ENCODE measurements at regions of chr9 and their contacts with region 1.

Region 1: DNA sequence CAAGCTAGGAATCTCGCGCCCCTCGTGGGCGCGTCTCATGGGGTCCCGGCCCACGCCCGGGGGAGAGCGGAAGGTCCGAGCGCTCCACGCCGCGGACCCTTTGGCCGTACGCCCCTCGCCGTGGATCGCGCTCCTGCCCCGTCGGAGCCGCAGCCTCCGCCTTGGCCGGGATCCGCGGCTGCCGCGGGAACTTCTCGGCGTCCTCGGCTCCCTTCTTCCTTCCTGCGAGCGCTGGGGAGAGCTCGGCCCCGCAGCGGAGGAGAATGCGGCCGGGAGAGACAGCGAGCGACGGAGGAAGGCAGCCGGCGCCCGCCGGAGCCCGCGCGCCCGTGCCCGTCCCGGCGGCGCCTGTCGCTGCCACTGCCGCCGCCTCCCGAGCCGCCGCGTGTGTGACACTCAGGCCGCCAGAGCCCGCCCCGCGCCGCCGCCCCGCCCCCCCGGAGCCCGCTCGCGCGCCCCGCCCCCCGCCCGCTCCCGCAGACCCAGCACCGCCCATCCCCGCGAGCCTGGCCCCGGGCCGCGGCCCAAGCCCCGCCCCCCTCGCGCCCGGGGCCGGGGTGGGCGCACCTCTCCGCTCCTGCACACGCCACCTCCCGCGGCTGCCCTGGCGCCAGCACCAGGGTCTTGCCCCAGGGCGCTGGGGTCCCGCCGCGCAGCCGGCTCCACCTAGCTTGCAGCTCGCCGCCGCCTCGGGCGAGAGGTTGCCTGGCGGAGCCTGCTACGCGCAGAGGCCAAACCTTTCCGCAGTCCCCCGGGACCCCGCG is at the start of gene SHB:
- DNase-seq: peak; percentile 63 to 75 (median 66)
- H3K4me3 ChIP-seq: peak within 1 kb of the TSS; percentile 79 to 91 (median 89)
- H3K4me3 Mint-ChIP-seq: peak within 1 kb of the TSS; percentile 94 to 98
- H3K27ac ChIP-seq: peak within 1 kb of the TSS; percentile 59 to 76
- H3K27ac Mint-ChIP-seq: peak within 1 kb of the TSS; percentile 16 to 88 (median 76)
- H3K4me1 ChIP-seq: peaks cover 23 to 34% of the 10 kb centered on the region in 2 donors
- H3K4me1 Mint-ChIP-seq: peaks cover 49% of the 10 kb centered on the region
- H3K27me3 ChIP-seq: peaks cover 2 to 9% of the 10 kb centered on the region in 2 donors
- H3K27me3 Mint-ChIP-seq: peaks cover 20 to 34% (median 27%) of the 10 kb centered on the region in 3 donors
- CTCF ChIP-seq: peak; percentile 38
- polyA plus RNA-seq, gene SHB: 0.27 to 1.3 (median 0.31) TPM

Region 2: DNA sequence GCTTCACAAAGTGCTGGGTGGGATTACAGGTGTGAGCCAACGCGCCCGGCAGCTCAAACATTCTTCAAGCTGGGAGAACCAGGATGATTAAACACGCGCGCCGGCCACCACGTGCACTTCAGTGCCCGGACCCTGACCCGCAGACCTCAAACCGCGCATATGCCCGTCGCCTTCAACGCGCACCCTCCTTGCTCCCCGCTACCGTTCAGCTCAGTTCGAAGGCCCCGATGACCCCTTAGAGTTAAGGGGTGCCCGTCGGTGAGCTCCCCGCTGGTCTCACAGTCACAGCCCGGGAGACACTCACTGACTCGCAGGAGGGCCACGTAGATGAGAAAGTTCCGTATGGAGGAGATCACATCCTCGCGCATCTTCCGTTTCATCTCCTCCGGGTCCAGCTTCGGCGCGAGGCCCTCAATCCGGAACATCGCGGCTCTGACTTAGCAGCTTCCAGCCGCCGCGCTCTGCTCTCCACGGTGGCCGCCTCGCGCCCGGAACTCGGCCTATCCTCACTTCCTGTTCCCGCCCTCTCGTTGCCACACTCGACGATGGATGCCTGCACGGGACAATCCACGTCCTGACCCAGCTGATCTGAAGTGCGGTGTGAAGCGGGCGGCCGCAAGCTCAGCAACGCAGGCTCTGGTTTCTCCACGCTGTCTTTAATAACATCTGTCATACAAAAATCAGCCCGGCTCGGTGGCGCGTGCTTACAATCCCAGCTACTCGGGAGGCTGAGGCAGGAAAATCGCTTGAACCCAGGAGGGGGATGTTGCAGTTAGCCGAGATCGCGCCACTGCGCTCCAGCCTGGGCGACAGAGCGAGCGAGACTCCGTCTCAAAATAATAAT is 476.7 kb before region 1 on chr9 and contains the start of gene TOMM5:
- intact Hi-C with region 1: no loop called
- DNase-seq: peak; percentile 86 to 93 (median 91)
- H3K4me3 ChIP-seq: peak within 1 kb of the TSS; percentile 63 to 94 (median 77)
- H3K4me3 Mint-ChIP-seq: peak within 1 kb of the TSS; percentile 98 to 99
- H3K27ac ChIP-seq: peak within 1 kb of the TSS; percentile 75 to 96
- H3K27ac Mint-ChIP-seq: peak within 1 kb of the TSS; percentile 94 to 98 (median 97)
- H3K4me1 ChIP-seq: peaks cover 28 to 32% of the 10 kb centered on the region in 2 donors
- H3K4me1 Mint-ChIP-seq: peaks cover 34% of the 10 kb centered on the region
- H3K27me3 ChIP-seq: peaks cover 0 to 4% of the 10 kb centered on the region in 2 donors
- H3K27me3 Mint-ChIP-seq: peaks cover 4 to 11% (median 7%) of the 10 kb centered on the region in 3 donors
- CTCF ChIP-seq: no peak
- polyA plus RNA-seq, gene TOMM5: 35.0 to 117 (median 112) TPM

Region 3: DNA sequence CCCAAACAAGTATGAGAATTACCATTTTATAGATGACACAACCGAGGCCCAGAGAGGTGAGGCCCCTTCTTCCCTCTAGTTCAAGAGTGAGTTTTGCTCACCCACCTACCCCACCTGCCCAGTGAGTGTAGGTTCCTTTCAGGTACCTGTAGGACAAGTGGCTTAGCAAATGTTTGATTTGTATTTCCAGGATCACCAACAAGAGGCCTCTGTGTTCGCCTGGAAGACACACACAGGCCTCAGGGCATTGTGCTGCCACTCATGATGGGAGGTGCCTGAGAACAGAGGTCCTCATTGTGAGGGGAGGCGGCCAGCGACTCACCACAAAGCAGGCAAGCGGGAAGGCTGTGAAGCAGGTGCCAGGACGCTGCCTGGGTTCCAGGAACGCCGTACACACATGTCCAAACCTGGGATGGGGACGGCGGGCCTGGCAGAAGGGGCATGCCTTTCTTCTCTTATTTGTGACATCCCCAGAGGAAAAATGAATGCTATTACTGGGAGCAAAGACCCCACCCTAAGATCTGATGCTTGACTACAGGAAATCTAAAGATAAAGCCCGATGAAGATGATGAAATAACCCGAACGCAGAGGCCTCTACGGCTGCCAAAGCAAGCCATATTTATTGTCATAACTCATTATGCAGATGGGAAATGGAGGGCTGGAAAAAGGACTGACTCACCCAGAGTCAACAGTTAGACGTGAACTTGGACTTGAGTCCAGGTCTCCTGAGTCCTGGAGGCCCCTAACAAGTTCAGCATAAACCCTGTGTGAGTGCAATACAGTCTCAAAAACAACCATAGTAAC is 104.9 kb before region 1 on chr9:
- intact Hi-C with region 1: loop called in 1 of 2 experiments (anchors 10 kb)
- DNase-seq: peak in 2 of 3 donors; percentile 25
- H3K4me3 ChIP-seq: no peak overlapping the region
- H3K4me3 Mint-ChIP-seq: no peak overlapping the region
- H3K27ac ChIP-seq: no peak overlapping the region
- H3K27ac Mint-ChIP-seq: peak overlapping the region in 3 of 7 donors; percentile 4 to 55 (median 44)
- H3K4me1 ChIP-seq: peaks cover 16 to 26% of the 10 kb centered on the region in 2 donors
- H3K4me1 Mint-ChIP-seq: peaks cover 42% of the 10 kb centered on the region
- H3K27me3 ChIP-seq: no peaks in the 10 kb centered on the region
- H3K27me3 Mint-ChIP-seq: peaks cover 0 to 5% (median 0%) of the 10 kb centered on the region in 3 donors
- CTCF ChIP-seq: no peak

Region 4: GRCh38 chr9:37994639-37995347 is 74.3 kb before region 1 on chr9:
- intact Hi-C with region 1: loop called (anchors 5 kb)
- DNase-seq: peak; percentile 95 to 98 (median 95)
- H3K4me3 ChIP-seq: peak overlapping the region in 1 of 3 experiments; percentile 41
- H3K4me3 Mint-ChIP-seq: peak overlapping the region; percentile 67 to 83
- H3K27ac ChIP-seq: peak overlapping the region; percentile 85 to 97
- H3K27ac Mint-ChIP-seq: peak overlapping the region; percentile 97 to 99 (median 99)
- H3K4me1 ChIP-seq: peaks cover 74% of the 10 kb centered on the region in 2 donors
- H3K4me1 Mint-ChIP-seq: peaks cover 81% of the 10 kb centered on the region
- H3K27me3 ChIP-seq: no peaks in the 10 kb centered on the region
- H3K27me3 Mint-ChIP-seq: peaks cover 0 to 3% (median 0%) of the 10 kb centered on the region in 3 donors
- CTCF ChIP-seq: no peak

Region 5: DNA sequence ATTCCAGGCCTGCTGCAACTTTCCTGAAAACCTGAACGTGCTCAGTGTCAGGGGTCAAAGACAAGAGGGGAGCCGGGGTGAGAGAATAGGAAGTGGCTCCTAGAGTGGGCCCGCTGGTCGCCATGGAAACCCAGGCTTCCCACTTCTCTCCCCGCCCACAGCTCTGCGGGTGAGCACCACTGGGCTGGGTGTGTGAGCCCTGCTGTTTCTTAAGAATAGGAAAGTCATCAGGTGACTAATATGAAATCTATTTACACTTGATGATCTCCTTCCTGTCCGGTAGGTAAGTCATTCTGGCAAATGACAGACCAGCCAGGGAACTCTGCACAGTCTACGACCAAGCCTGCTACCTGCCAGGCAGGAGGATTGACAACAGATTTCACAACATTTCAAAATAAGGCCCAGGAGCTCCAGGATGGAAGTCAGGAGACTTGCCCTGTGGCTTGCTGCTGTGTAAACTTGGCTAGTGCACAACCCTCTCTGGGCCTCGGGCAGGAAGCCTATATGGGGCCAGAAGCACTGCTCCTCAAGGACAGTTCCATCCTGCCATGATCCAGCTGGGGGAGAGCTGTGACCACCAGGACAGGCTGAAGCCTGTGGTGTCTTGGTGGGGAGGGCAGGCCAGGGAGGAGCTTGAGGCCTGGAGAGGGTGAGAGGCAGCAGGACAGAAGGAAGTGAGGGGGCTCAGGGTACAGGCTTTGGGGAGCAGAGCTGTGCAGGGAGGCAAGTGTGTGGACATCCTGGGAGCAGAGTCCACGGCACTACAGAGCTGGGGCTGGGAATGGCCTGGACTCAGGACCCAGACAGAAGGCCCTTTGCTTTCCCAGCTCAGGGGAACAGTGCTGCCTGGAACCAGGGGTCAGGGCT is 60.6 kb before region 1 on chr9:
- intact Hi-C with region 1: loop called (anchors 5 to 10 kb)
- DNase-seq: peak; percentile 86 to 95 (median 90)
- H3K4me3 ChIP-seq: no peak overlapping the region
- H3K4me3 Mint-ChIP-seq: peak overlapping the region; percentile 26 to 60
- H3K27ac ChIP-seq: peak overlapping the region; percentile 67 to 78
- H3K27ac Mint-ChIP-seq: peak overlapping the region; percentile 89 to 95 (median 93)
- H3K4me1 ChIP-seq: peaks cover 18 to 29% of the 10 kb centered on the region in 2 donors
- H3K4me1 Mint-ChIP-seq: peaks cover 36% of the 10 kb centered on the region
- H3K27me3 ChIP-seq: no peaks in the 10 kb centered on the region
- H3K27me3 Mint-ChIP-seq: peaks cover 0 to 6% (median 3%) of the 10 kb centered on the region in 3 donors
- CTCF ChIP-seq: no peak

Region 6: GRCh38 chr9:38017149-38017884 is 51.7 kb before region 1 on chr9:
- intact Hi-C with region 1: loop called in 1 of 2 experiments (anchors 10 kb)
- DNase-seq: no peak
- H3K4me3 ChIP-seq: no peak overlapping the region
- H3K4me3 Mint-ChIP-seq: no peak overlapping the region
- H3K27ac ChIP-seq: no peak overlapping the region
- H3K27ac Mint-ChIP-seq: no peak overlapping the region
- H3K4me1 ChIP-seq: peaks cover 14 to 15% of the 10 kb centered on the region in 2 donors
- H3K4me1 Mint-ChIP-seq: peaks cover 14% of the 10 kb centered on the region
- H3K27me3 ChIP-seq: no peaks in the 10 kb centered on the region
- H3K27me3 Mint-ChIP-seq: peaks cover 0 to 6% (median 0%) of the 10 kb centered on the region in 3 donors
- CTCF ChIP-seq: no peak

Measured in CD14-positive monocyte (primary cell).